Naive thymus-derived CD4-positive, alpha-beta T cell (primary cell): ENCODE measurements at regions of chr2 and their contacts with region 1.

Region 1: DNA sequence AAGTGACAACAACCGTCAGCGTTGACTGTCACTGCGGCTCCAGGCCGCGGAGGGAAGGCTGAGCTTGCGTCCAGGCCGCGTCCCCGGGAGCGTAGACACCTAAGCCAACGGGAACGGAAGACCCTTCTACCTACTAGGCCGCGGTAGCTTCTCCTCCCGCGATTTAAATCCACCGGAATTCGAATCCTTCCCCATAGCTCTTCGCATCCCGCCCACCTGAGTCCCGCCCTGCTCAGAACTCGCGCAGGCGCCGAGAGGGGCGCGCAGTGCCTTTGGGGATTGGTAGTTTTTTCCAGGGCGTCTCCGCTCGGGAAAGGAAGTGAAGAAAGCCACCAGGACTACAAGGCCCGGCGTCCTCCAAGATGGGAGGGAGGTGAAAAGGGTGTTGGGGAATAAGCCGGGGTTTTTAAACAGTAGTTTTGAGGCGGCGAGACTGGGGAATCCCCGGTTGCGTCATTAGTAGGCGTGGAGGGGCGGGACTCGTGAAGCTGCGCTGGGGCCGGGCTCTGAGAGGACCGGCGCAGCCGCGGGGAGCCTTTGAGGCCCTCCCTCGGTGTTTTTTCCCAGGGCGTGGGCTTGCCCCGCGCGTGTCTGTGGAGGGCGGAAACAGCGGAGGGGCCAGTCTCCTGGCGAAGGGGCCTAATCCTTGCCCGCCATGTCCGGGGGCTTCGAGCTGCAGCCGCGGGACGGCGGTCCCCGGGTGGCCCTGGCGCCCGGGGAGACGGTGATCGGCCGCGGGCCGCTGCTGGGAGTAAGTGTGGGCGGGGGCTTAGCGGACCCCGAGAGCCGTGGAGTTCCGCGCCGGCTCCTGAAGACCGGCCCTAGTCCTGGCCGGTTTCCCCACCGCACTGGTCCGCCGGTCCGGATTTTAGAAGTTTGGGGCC is at the starts of genes APLF and FBXO48:
- DNase-seq: peak; percentile 90 to 99 (median 99)
- ATAC-seq: peak; percentile 94
- H3K4me3 ChIP-seq: peak within 1 kb of the TSS; percentile 99
- H3K4me3 Mint-ChIP-seq: peak within 1 kb of the TSS; percentile 88 to 99 (median 94)
- H3K27ac ChIP-seq: peak within 1 kb of the TSS; percentile 89
- H3K27ac Mint-ChIP-seq: peak within 1 kb of the TSS; percentile 80 to 97 (median 89)
- H3K4me1 ChIP-seq: peaks cover 7 to 23% of the 10 kb centered on the region in 2 donors
- H3K4me1 Mint-ChIP-seq: peaks cover 10 to 55% (median 39%) of the 10 kb centered on the region in 7 donors
- H3K27me3 ChIP-seq: no peaks in the 10 kb centered on the region
- H3K27me3 Mint-ChIP-seq: no peaks in the 10 kb centered on the region
- total RNA-seq, gene APLF: 2.9 to 8.9 (median 3.8) TPM
- total RNA-seq, gene FBXO48: 1.1 to 5.6 (median 1.7) TPM

Region 2: DNA sequence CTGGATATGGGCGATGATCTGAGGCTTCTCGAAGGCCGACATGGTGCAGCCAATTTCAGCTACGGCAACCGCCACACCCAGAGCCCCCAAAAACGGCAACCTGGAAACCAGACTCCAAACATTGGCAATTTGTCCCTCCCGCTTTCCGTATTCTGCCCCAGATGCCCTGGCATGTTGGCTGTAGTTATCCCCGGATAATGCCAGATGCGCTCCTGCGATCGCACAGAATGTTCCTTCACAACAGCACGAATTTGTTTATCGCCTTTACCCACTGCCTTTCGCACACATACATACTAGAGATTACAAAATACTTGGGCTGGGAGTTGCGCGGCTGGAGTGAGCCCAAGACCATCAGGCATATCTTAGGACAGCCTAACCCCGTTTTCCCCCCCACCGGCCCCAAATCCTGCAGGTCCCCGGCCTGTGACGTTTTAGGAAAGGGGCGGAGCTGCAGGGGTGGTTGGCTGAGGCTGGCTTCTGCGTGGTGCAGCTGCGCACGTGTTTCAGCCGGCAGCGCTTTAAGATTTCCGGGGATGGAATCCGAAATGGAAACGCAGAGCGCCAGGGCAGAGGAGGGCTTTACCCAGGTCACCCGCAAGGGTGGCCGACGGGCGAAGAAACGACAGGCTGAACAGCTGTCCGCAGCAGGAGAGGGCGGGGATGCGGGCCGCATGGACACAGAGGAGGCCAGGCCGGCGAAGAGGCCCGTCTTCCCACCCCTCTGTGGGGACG is 309.8 kb before region 1 on chr2 and contains the start of gene PNO1:
- CTCF ChIA-PET with region 1: no interaction called
- POLR2A ChIA-PET with region 1: no interaction called
- intact Hi-C with region 1: loop called (anchors 1 to 2 kb)
- DNase-seq: peak; percentile 95 to 100 (median 98)
- ATAC-seq: peak; percentile 98
- H3K4me3 ChIP-seq: peak within 1 kb of the TSS; percentile 93
- H3K4me3 Mint-ChIP-seq: peak within 1 kb of the TSS; percentile 84 to 99 (median 94)
- H3K27ac ChIP-seq: peak within 1 kb of the TSS; percentile 87
- H3K27ac Mint-ChIP-seq: peak within 1 kb of the TSS; percentile 96 to 100 (median 99)
- H3K4me1 ChIP-seq: peaks cover 19 to 38% of the 10 kb centered on the region in 2 donors
- H3K4me1 Mint-ChIP-seq: peaks cover 30 to 72% (median 58%) of the 10 kb centered on the region in 7 donors
- H3K27me3 ChIP-seq: no peaks in the 10 kb centered on the region
- H3K27me3 Mint-ChIP-seq: no peaks in the 10 kb centered on the region
- total RNA-seq, gene PNO1: 11.0 to 31.0 (median 12.8) TPM

Region 3: GRCh38 chr2:68244456-68244855 is 222.9 kb before region 1 on chr2:
- CTCF ChIA-PET with region 1: no interaction called
- POLR2A ChIA-PET with region 1: no interaction called
- intact Hi-C with region 1: no loop called
- DNase-seq: no peak
- ATAC-seq: no peak
- H3K4me3 ChIP-seq: no peak overlapping the region
- H3K4me3 Mint-ChIP-seq: no peak overlapping the region
- H3K27ac ChIP-seq: no peak overlapping the region
- H3K27ac Mint-ChIP-seq: no peak overlapping the region
- H3K4me1 ChIP-seq: peaks cover 67 to 82% of the 10 kb centered on the region in 2 donors
- H3K4me1 Mint-ChIP-seq: peaks cover 0 to 36% (median 22%) of the 10 kb centered on the region in 7 donors
- H3K27me3 ChIP-seq: no peaks in the 10 kb centered on the region
- H3K27me3 Mint-ChIP-seq: no peaks in the 10 kb centered on the region

Region 4: DNA sequence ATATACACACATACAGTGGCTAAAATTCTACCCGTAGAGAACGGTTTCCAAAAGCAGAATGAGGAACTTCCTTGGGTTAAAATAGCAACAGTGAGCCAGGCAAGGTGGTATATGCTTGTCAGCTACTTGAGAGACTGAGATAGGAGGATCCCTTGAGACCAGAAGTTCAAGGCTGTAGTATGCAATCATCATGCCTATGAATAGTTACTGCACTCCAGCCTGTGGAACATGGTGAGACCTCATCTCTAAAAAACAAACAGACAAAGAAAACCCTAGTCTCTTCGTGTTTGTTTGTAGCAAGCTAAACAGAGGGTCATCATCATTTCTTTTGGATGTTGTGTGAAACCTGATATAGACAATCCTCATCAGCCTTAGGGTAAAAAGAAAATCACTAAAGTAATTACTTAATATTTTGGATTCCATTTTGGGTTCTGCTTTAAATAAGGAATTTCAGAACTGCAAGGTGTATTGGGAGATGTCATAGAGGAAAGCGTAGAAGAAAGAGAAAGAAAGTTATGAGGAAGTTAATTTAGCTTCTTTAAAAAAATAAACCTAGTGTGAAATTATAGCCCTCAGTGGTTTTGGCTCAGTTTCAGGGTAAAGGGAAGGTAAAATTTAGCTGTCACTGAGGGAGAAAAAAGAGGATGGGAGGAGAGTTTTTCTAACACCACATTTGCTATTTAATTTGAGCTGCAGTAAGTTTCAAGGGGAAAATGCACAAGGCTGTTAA is 55.8 kb before region 1 on chr2:
- CTCF ChIA-PET with region 1: no interaction called
- POLR2A ChIA-PET with region 1: no interaction called
- intact Hi-C with region 1: no loop called
- DNase-seq: no peak
- ATAC-seq: peak; percentile 58
- H3K4me3 ChIP-seq: no peak overlapping the region
- H3K4me3 Mint-ChIP-seq: no peak overlapping the region
- H3K27ac ChIP-seq: no peak overlapping the region
- H3K27ac Mint-ChIP-seq: peak overlapping the region in 2 of 9 donors; percentile 2 to 10
- H3K4me1 ChIP-seq: peaks cover 0 to 26% of the 10 kb centered on the region in 2 donors
- H3K4me1 Mint-ChIP-seq: peaks cover 0 to 20% (median 6%) of the 10 kb centered on the region in 7 donors
- H3K27me3 ChIP-seq: no peaks in the 10 kb centered on the region
- H3K27me3 Mint-ChIP-seq: peaks cover under 1 to 36% (median 8%) of the 10 kb centered on the region in 5 donors

Region 5: GRCh38 chr2:68594674-68595492 is 127.6 kb after region 1 on chr2:
- CTCF ChIA-PET with region 1: interaction called, 36 read pairs
- POLR2A ChIA-PET with region 1: no interaction called
- intact Hi-C with region 1: loop called (anchors 1 kb)
- DNase-seq: peak; percentile 5 to 46 (median 39)
- ATAC-seq: peak; percentile 74
- H3K4me3 ChIP-seq: no peak overlapping the region
- H3K4me3 Mint-ChIP-seq: peak overlapping the region in 3 of 10 donors; percentile 2 to 23 (median 4)
- H3K27ac ChIP-seq: no peak overlapping the region
- H3K27ac Mint-ChIP-seq: peak overlapping the region in 2 of 9 donors; percentile 1 to 5
- H3K4me1 ChIP-seq: no peaks in the 10 kb centered on the region
- H3K4me1 Mint-ChIP-seq: peaks cover 3 to 10% (median 7%) of the 10 kb centered on the region in 7 donors
- H3K27me3 ChIP-seq: no peaks in the 10 kb centered on the region
- H3K27me3 Mint-ChIP-seq: peaks cover 3 to 25% (median 16%) of the 10 kb centered on the region in 5 donors

Region 6: GRCh38 chr2:68734688-68735525 is 267.6 kb after region 1 on chr2 and contains the start of gene ARHGAP25:
- CTCF ChIA-PET with region 1: interaction called, 3 read pairs
- POLR2A ChIA-PET with region 1: interaction called, 4 read pairs
- intact Hi-C with region 1: loop called (anchors 1 to 10 kb)
- DNase-seq: peak; percentile 20 to 81 (median 69)
- ATAC-seq: peak; percentile 78
- H3K4me3 ChIP-seq: peak within 1 kb of the TSS; percentile 77
- H3K4me3 Mint-ChIP-seq: no peak within 1 kb of the TSS
- H3K27ac ChIP-seq: peak within 1 kb of the TSS; percentile 78
- H3K27ac Mint-ChIP-seq: no peak within 1 kb of the TSS
- H3K4me1 ChIP-seq: peaks cover 38 to 48% of the 10 kb centered on the region in 2 donors
- H3K4me1 Mint-ChIP-seq: peaks cover 23 to 37% (median 32%) of the 10 kb centered on the region in 7 donors
- H3K27me3 ChIP-seq: no peaks in the 10 kb centered on the region
- H3K27me3 Mint-ChIP-seq: no peaks in the 10 kb centered on the region
- total RNA-seq, gene ARHGAP25: 68.2 to 139 (median 116) TPM

Region 7: DNA sequence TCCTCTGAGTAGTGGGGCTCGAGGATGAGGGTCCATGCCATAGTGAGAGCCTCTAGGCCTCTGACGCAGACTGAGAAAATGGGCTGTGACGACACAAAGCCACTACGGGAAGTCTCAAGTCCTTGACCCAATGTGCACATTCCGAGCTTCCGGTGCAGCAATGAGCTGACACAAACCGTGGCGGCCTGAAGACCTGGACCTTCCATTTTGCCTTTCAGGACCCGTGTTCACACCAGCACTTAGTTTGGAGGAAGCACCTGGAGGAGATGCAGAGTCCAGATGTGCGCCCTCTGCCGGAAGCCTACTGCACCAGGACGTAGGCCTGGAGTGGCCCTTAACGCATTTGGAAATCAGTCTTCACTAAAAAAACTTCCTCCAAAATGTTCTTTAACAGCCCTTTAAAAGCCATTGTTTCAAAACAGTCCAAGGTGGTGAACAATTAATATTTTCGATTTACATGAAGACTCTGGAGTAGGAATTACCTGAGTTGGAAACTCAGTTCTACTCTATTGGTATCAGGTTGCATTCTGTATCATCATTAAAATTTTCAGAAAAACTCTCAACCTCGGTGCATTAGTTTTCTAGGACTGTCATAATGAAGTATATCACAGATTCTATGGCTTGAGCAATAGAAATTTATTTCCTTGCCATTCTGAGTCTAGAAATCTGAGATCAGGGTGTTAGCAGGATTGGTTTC is 370.0 kb after region 1 on chr2:
- CTCF ChIA-PET with region 1: interaction called, 6 read pairs
- POLR2A ChIA-PET with region 1: interaction called, 3 read pairs
- intact Hi-C with region 1: loop called in 1 of 2 experiments (anchors 1 kb)
- DNase-seq: peak; percentile 25 to 67 (median 57)
- ATAC-seq: peak; percentile 77
- H3K4me3 ChIP-seq: no peak overlapping the region
- H3K4me3 Mint-ChIP-seq: no peak overlapping the region
- H3K27ac ChIP-seq: no peak overlapping the region
- H3K27ac Mint-ChIP-seq: peak overlapping the region in 2 of 9 donors; percentile 15 to 75
- H3K4me1 ChIP-seq: peaks cover 0 to 13% of the 10 kb centered on the region in 2 donors
- H3K4me1 Mint-ChIP-seq: peaks cover 15 to 51% (median 43%) of the 10 kb centered on the region in 7 donors
- H3K27me3 ChIP-seq: no peaks in the 10 kb centered on the region
- H3K27me3 Mint-ChIP-seq: no peaks in the 10 kb centered on the region

Region 8: GRCh38 chr2:69386789-69387734 is 919.7 kb after region 1 on chr2 and contains the start of gene GFPT1:
- CTCF ChIA-PET with region 1: no interaction called
- POLR2A ChIA-PET with region 1: no interaction called
- intact Hi-C with region 1: loop called in 1 of 2 experiments (anchors 5 kb)
- DNase-seq: peak; percentile 85 to 96 (median 91)
- ATAC-seq: peak; percentile 99
- H3K4me3 ChIP-seq: peak within 1 kb of the TSS; percentile 68
- H3K4me3 Mint-ChIP-seq: peak within 1 kb of the TSS; percentile 84 to 94 (median 88)
- H3K27ac ChIP-seq: peak within 1 kb of the TSS; percentile 83
- H3K27ac Mint-ChIP-seq: peak within 1 kb of the TSS; percentile 63 to 94 (median 86)
- H3K4me1 ChIP-seq: peaks cover 17 to 18% of the 10 kb centered on the region in 2 donors
- H3K4me1 Mint-ChIP-seq: peaks cover 28 to 53% (median 41%) of the 10 kb centered on the region in 7 donors
- H3K27me3 ChIP-seq: no peaks in the 10 kb centered on the region
- H3K27me3 Mint-ChIP-seq: no peaks in the 10 kb centered on the region
- total RNA-seq, gene GFPT1: 12.8 to 29.8 (median 16.6) TPM